Activated B cell treated with CpG ODN at 0.5 μM for 24 hours (primary cell): ENCODE measurements at regions of chr11 and their contacts with region 1.

Region 1: GRCh38 chr11:130916238-130916855 is at the start of gene SNX19:
- DNase-seq: peak; percentile 94
- ATAC-seq: peak; percentile 99
- H3K4me3 Mint-ChIP-seq: peak within 1 kb of the TSS; percentile 86
- H3K27ac Mint-ChIP-seq: peak within 1 kb of the TSS; percentile 87
- H3K4me1 Mint-ChIP-seq: peaks cover 37% of the 10 kb centered on the region
- H3K27me3 Mint-ChIP-seq: peaks cover 18% of the 10 kb centered on the region
- CTCF ChIP-seq: peak; percentile 84
- total RNA-seq, gene SNX19: 53.7 and 60.4 TPM in 2 replicates

Region 2: GRCh38 chr11:129279326-129280026 is 1636.9 kb before region 1 on chr11:
- CTCF ChIA-PET with region 1: no interaction called
- POLR2A ChIA-PET with region 1: no interaction called
- intact Hi-C with region 1: loop called (anchors 5 kb)
- DNase-seq: peak; percentile 73
- ATAC-seq: peak; percentile 80
- H3K4me3 Mint-ChIP-seq: peak overlapping the region; percentile 79
- H3K27ac Mint-ChIP-seq: peak overlapping the region; percentile 47
- H3K4me1 Mint-ChIP-seq: peaks cover 24% of the 10 kb centered on the region
- H3K27me3 Mint-ChIP-seq: peaks cover 26% of the 10 kb centered on the region
- CTCF ChIP-seq: no peak

Region 3: GRCh38 chr11:129881570-129882170 is 1034.7 kb before region 1 on chr11:
- CTCF ChIA-PET with region 1: no interaction called
- POLR2A ChIA-PET with region 1: no interaction called
- intact Hi-C with region 1: no loop called
- DNase-seq: no peak
- ATAC-seq: peak; percentile 52
- H3K4me3 Mint-ChIP-seq: no peak overlapping the region
- H3K27ac Mint-ChIP-seq: no peak overlapping the region
- H3K4me1 Mint-ChIP-seq: no peaks in the 10 kb centered on the region
- H3K27me3 Mint-ChIP-seq: no peaks in the 10 kb centered on the region
- CTCF ChIP-seq: no peak

Region 4: DNA sequence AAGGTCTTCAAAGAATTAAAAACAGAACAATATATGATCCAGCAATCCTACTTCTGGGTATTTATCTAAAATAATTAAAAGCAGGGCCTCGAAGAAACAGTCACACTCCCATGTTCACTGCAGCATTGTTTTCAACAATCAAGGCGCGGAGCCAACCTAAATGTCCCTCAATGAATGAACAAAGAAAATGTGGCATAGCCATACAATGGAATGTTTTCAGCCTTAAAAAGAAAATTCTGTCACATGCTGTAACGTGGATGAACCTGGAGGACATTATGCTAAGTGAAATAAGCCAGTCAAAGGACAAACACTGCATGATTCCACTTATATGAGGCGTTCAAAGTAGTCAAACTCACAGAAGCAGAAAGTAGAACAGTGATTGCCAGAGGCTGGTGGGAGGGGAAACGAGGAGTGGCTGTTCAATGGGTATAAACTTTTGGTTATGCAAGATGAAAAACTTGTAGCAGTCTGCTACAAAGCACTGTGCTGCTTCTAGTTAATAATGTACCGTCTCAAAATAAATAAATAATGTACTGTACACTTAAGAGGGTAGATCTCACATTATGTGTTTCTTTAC is 41.3 kb before region 1 on chr11:
- CTCF ChIA-PET with region 1: no interaction called
- POLR2A ChIA-PET with region 1: interaction called, 11 read pairs
- intact Hi-C with region 1: no loop called
- DNase-seq: no peak
- ATAC-seq: no peak
- H3K4me3 Mint-ChIP-seq: no peak overlapping the region
- H3K27ac Mint-ChIP-seq: no peak overlapping the region
- H3K4me1 Mint-ChIP-seq: no peaks in the 10 kb centered on the region
- H3K27me3 Mint-ChIP-seq: no peaks in the 10 kb centered on the region
- CTCF ChIP-seq: no peak